Activated naive CD4-positive, alpha-beta T cell treated with anti-CD3 and anti-CD28 coated beads for 36 hours (primary cell): ENCODE measurements at regions of chr9 and their contacts with region 1.

Region 1: DNA sequence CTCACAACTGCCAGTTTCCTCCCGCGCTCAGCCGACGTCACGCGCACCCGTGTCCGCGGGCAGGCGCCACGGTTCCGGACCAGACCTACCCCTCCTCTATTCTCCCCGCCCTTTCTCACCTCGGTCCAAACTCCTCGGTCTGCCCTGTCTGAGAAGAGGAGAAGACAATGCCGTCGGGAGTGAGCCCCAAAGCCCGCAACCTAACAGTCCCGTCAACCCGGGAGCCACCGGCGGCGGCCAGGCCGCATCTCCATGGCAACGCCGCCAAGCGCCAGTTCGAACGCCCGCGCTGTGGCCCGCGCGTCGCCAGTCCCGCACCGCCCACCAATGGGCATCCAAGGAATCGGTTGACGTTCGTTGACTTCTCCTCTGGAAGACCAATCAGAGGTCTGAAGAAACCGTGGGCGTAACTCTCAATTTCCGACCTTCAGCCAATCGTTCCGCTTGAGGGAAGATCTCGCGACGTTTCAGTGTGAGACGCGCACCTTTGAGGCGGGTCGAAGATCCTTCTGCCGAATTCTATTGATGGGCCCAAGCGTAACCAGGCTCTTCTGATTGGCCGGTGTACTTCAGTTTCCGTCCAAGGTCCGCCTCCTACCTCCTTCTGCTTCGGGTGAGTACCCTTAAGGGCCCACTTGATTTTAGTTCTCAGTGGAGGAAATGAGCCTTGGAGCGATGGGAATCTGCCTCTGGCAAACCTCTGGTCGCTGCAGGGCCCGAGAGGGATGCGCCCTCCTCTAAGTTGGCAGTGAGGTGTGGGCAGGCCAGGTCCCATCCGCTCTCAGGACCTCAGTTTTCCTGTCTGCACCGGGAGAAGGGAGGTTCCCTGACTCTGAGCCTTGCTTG is at the starts of genes KIF24 and NUDT2:
- DNase-seq: peak; percentile 98
- H3K4me3 Mint-ChIP-seq: peak within 1 kb of the TSS; percentile 88
- H3K27ac Mint-ChIP-seq: peak within 1 kb of the TSS; percentile 94
- H3K4me1 Mint-ChIP-seq: peaks cover 42% of the 10 kb centered on the region
- H3K27me3 Mint-ChIP-seq: no peaks in the 10 kb centered on the region
- total RNA-seq, gene KIF24: 4.2 to 4.5 TPM
- total RNA-seq, gene NUDT2: 39.2 to 42.9 TPM

Region 2: DNA sequence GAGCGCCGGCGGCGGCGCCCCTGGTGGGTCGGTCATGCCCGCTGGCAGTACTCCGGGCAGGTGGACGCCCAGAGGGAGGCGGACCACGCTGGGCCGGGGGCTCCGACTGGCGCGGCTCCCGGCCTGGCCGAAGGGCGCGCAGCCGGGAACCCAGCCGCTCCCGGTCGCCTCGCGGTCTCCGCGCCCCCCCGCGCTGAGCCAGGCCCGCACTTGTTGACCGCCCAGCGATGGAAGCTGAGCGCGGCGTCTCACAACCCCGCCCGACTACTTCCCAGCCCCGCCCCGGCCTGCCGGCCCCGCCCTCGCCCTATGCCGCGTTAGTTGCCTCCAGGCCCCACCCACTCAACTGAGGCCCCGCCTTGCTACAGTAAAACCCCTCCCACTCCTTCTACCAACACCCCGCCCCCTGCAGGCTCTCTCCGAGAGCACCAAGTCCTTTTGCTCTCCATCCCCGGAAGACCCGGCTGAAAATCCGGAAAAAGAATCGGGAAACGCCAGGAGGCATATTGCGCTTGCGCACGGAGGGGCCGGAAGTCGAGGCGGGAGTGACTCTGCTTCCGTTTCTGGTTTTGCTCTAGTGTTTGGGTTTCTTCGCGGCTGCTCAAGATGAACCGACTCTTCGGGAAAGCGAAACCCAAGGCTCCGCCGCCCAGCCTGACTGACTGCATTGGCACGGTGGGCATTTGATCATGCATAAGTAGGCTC is 1064.6 kb before region 1 on chr9 and contains the starts of genes BAG1 and CHMP5:
- CTCF ChIA-PET with region 1: no interaction called
- intact Hi-C with region 1: loop called (anchors 1 kb)
- DNase-seq: peak; percentile 100
- H3K4me3 Mint-ChIP-seq: peak within 1 kb of the TSS; percentile 94
- H3K27ac Mint-ChIP-seq: peak within 1 kb of the TSS; percentile 98
- H3K4me1 Mint-ChIP-seq: peaks cover 47% of the 10 kb centered on the region
- H3K27me3 Mint-ChIP-seq: no peaks in the 10 kb centered on the region
- total RNA-seq, gene BAG1: 38.1 to 40.5 TPM
- total RNA-seq, gene CHMP5: 151 to 162 TPM

Region 3: DNA sequence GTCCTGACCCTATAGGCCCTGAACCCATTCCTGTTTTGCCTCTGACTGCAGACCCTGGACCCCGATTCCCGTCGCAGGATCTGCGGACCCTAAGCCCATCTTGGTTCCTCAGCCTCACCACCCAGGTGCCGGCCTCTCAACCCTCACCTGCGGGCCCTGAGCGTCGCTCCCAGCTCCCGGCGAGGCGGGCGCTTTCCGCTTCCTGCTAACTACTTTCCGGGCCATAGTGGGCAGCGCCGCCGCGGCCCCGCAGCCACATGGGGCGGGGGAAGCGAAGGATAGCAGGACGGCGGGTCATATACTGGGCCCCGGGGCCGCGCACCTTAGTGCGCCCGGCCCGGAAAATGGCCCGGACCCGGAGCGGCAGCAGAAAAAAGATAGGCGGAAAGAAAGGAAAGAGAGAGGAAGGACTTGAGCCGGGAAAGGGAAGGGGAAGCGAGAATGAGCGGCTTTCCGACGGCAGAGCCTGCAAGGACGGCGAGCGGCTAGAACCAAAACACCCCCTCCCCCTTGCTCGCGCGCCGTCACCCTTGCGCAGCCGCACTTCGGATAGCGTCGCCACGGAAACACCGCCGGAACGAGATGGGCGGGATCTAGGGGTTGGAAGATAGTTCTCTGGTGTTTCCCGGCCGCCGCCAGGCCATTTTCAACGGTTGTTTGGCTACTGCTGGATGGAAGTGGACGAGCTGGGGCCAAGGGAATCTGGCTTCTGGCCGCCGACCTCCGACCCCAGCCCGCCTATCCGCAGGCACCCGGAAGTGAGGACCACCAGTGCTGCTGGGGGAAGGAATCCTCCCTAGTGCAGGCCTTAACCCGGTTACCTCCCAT is 202.8 kb before region 1 on chr9 and contains the start of gene DCAF12:
- CTCF ChIA-PET with region 1: no interaction called
- intact Hi-C with region 1: loop called (anchors 1 kb)
- DNase-seq: peak; percentile 94
- H3K4me3 Mint-ChIP-seq: peak within 1 kb of the TSS; percentile 93
- H3K27ac Mint-ChIP-seq: peak within 1 kb of the TSS; percentile 93
- H3K4me1 Mint-ChIP-seq: peaks cover 35% of the 10 kb centered on the region
- H3K27me3 Mint-ChIP-seq: no peaks in the 10 kb centered on the region
- total RNA-seq, gene DCAF12: 34.0 to 37.0 TPM

Region 4: DNA sequence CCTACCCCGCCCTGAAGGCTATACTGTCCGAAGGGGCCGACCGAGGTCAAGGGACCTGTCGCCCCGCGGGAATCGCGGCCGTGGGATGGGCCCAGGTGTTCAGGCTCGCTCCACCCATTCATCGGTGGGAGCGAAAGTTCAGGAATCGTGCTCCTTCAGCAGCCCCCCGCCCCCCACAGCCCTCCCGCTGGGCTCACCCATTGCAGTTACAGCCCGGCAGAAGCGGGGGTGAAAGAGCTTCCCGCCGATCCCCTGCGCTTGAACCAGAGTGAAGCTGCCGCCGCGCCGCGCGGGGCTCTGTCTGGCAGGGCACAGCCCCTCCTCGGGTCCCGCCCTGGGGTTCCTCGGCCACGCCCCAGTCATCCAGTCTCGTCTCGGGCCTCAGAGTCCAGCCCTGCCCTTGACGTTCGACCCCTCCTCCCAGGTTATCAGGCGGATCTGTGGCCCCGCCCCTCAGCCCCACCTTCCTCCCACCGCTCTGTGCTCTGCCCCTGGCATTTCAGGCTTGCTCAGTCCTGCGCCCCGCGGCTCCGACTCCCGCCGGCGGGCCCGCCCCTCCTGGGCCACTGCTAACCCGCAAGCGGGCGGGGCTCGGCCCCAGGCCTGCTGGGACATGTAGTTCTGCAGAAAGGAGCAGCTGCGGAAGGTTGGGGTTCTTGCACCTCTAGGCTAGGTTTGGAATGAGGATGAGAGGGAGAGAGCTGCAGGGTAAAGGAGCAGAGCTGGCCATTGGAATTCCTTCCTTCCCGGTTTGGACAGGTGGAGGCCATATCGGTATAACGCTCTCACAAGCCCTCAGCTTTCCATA is 47.6 kb after region 1 on chr9 and contains the start of gene MYORG:
- CTCF ChIA-PET with region 1: interaction called, 89 read pairs
- intact Hi-C with region 1: loop called (anchors 1 kb)
- DNase-seq: peak; percentile 97
- H3K4me3 Mint-ChIP-seq: peak within 1 kb of the TSS; percentile 80
- H3K27ac Mint-ChIP-seq: no peak within 1 kb of the TSS
- H3K4me1 Mint-ChIP-seq: peaks cover 30% of the 10 kb centered on the region
- H3K27me3 Mint-ChIP-seq: no peaks in the 10 kb centered on the region
- total RNA-seq, gene MYORG: 1.1 to 2.0 TPM

Region 5: DNA sequence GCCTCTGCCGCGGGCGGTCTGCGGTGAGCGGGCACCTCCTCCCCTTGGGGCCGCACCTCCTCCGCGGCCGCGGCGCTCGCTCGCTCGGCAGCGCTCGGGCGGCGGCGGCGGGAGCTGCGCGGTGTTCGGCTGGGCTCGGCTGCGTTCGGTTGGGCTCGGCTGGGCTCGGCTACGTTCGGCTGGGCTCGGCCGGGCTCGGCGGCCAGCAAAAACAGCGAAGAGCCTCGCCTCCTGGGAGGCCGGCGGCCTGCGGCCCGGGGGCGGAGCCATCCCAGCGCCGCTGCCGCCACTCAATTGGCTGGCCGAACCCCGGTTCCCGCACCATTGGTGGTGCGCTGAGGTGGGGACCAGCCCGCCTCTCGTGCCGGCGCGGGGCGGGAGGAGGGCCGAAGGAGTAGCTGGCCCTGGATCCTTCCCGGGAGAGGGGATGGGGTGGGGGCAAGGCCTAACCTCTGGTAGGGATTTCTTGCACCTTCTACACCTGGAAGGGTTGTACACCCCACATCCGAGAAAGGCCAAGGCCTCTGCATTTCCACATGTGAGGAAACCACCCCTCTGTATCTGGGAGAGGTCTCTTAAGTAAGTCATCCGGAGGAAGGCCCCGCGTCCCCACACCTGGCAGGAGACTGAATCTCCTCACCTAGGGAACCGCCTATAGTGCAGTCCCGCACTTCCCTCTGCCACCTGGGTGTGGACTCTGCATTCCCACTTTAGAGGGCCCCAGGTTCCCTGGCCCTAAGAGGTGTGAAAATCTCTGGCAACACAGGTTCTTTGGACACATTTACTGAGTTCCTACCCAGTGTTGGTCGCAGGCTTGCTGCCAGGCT is 194.0 kb after region 1 on chr9 and contains the start of gene ENHO:
- CTCF ChIA-PET with region 1: no interaction called
- intact Hi-C with region 1: loop called (anchors 1 kb)
- DNase-seq: peak; percentile 88
- H3K4me3 Mint-ChIP-seq: peak within 1 kb of the TSS; percentile 57
- H3K27ac Mint-ChIP-seq: no peak within 1 kb of the TSS
- H3K4me1 Mint-ChIP-seq: peaks cover 22% of the 10 kb centered on the region
- H3K27me3 Mint-ChIP-seq: peaks cover 11% of the 10 kb centered on the region
- total RNA-seq, gene ENHO: 0.19 to 0.27 TPM

Region 6: GRCh38 chr9:34994260-34994899 is 665.2 kb after region 1 on chr9:
- CTCF ChIA-PET with region 1: no interaction called
- intact Hi-C with region 1: loop called (anchors 2 kb)
- DNase-seq: no peak
- H3K4me3 Mint-ChIP-seq: peak overlapping the region; percentile 0
- H3K27ac Mint-ChIP-seq: no peak overlapping the region
- H3K4me1 Mint-ChIP-seq: peaks cover 56% of the 10 kb centered on the region
- H3K27me3 Mint-ChIP-seq: no peaks in the 10 kb centered on the region